OCI-LY7 (cell line): ENCODE measurements at regions of chr14 and their contacts with region 1.

Region 1: GRCh38 chr14:70907176-70907995 is at the start of gene PCNX1:
- DNase-seq: peak; percentile 94
- H3K4me3 ChIP-seq: peak within 1 kb of the TSS; percentile 81
- H3K27ac ChIP-seq: peak within 1 kb of the TSS; percentile 66
- H3K4me1 ChIP-seq: peaks cover 15% of the 10 kb centered on the region
- CTCF ChIP-seq: peak; percentile 81
- total RNA-seq, gene PCNX1: 27.7 and 33.8 TPM in 2 replicates

Region 2: DNA sequence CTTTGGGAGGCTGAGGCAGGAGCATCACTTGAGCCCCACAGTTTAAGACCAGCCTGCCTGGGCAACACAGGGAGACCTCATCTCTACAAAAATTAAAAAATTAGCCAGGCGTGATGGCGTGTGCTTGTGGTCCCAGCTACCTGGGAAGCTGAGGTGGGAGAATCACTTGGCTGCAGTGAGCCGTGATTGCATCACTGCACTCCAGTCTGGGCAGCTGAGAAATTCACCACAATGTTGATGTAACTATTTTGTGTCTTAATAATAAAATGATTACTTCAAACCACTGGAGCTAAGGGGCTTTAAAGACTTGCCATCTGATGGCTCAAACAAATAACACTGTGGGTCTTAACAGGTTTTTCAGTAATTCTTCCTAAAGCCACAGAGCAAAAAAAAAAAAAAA is 1520.1 kb before region 1 on chr14:
- CTCF ChIA-PET with region 1: no interaction called
- POLR2A ChIA-PET with region 1: no interaction called
- intact Hi-C with region 1: no loop called
- DNase-seq: no peak
- H3K4me3 ChIP-seq: no peak overlapping the region
- H3K27ac ChIP-seq: no peak overlapping the region
- H3K4me1 ChIP-seq: peaks cover 10% of the 10 kb centered on the region
- CTCF ChIP-seq: no peak

Region 3: DNA sequence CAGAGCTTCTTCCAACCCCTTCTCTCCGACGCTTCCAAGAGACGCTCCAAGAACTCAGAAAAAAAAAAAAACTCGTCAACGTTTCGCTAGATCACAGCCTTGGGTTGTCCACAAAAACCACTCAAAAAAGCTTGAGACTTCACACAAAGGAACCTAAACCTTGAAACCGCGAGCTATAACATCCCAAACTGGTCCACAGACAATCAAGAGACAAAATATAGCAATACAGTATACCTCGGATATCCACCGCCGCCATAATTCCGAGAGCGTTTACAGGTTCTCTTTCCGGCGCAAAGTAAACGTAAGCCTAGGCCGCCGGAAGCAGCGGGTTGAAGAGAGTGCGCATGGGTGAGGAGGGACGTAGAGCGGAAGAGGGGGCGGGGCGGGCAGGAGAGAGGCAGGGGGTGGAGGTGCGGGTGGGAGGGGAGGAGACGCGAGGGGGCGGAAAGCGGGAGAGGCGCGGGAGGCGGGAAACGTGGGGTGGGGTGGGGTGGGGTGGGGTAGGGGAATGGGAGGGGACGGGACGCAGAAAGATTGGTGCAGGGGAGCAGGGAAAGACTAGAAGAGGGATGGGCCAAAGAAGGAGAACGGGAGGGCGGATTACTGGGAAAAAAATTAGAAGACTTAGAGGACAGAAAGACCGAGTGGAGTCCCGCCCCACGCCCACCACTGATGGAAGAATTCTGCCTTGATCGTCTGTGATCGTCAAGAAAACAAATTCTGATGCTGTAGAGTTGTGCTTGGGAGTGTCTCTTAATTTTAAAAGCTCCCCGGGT is 306.8 kb before region 1 on chr14 and contains the start of gene MED6:
- CTCF ChIA-PET with region 1: no interaction called
- POLR2A ChIA-PET with region 1: no interaction called
- intact Hi-C with region 1: loop called (anchors 2 kb)
- DNase-seq: peak; percentile 94
- H3K4me3 ChIP-seq: peak within 1 kb of the TSS; percentile 97
- H3K27ac ChIP-seq: peak within 1 kb of the TSS; percentile 34
- H3K4me1 ChIP-seq: peaks cover 34% of the 10 kb centered on the region
- CTCF ChIP-seq: no peak
- total RNA-seq, gene MED6: 28.4 and 28.8 TPM in 2 replicates

Region 4: GRCh38 chr14:70955543-70956480 is 48.4 kb after region 1 on chr14:
- CTCF ChIA-PET with region 1: no interaction called
- POLR2A ChIA-PET with region 1: no interaction called
- intact Hi-C with region 1: loop called (anchors 1 kb)
- DNase-seq: peak; percentile 27
- H3K4me3 ChIP-seq: no peak overlapping the region
- H3K27ac ChIP-seq: no peak overlapping the region
- H3K4me1 ChIP-seq: no peaks in the 10 kb centered on the region
- CTCF ChIP-seq: peak; percentile 82

Region 5: DNA sequence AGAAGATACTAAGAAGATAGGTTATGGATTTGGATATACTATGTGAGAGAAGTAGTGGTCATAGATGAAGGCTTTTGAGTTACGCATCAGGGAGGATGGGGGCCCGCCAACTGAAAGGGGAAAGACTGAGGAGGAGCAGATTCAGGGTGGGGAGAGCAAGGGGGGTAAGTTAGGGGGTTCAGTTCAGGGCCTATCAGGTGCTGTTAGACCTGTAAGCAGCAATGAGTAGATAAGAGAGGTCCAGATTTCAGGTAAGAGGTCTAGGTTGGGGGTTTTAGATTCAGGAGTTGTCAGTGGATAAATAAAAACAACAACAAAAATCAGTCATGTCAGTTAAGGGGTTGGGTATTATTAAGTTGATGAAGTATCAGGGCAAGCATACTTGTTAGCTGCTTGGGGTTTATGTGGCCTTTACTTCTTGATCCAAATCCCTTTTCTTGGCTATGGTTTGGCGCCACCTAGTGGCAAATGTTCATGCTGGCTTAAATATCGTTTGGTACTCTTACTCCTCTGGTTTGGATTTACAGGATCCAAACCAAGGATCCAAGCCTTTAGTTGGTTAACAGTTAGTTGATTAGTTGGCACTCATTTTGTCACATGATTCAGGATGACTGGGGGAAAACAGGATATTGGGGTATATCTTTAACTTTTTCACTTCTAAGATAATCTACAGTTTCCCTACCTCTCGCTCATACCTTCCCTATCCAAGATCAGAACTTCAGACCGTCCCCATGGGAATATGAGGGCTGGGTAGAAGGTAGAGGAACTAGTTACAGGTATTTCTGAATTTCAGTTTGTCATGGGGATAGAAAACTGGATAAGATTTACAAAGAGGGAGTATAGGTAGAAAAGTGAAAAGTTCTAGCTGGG is 65.0 kb after region 1 on chr14:
- CTCF ChIA-PET with region 1: no interaction called
- POLR2A ChIA-PET with region 1: interaction called, 5 read pairs
- intact Hi-C with region 1: loop called (anchors 1 kb)
- DNase-seq: peak; percentile 79
- H3K4me3 ChIP-seq: no peak overlapping the region
- H3K27ac ChIP-seq: no peak overlapping the region
- H3K4me1 ChIP-seq: no peaks in the 10 kb centered on the region
- CTCF ChIP-seq: peak; percentile 97

Region 6: GRCh38 chr14:71050204-71050823 is 142.9 kb after region 1 on chr14:
- CTCF ChIA-PET with region 1: no interaction called
- POLR2A ChIA-PET with region 1: no interaction called
- intact Hi-C with region 1: no loop called
- DNase-seq: peak; percentile 21
- H3K4me3 ChIP-seq: no peak overlapping the region
- H3K27ac ChIP-seq: no peak overlapping the region
- H3K4me1 ChIP-seq: no peaks in the 10 kb centered on the region
- CTCF ChIP-seq: peak; percentile 73